Tibial artery (tissue), 4 donors: ENCODE measurements at regions of chr15 and their contacts with region 1.

Region 1: GRCh38 chr15:25470230-25470629 is 31.4 kb upstream of the UBE3A start:
- DNase-seq: no peak
- H3K4me3 ChIP-seq: no peak overlapping the region
- H3K27ac ChIP-seq: no peak overlapping the region
- H3K4me1 ChIP-seq: no peaks in the 10 kb centered on the region
- H3K27me3 ChIP-seq: no peaks in the 10 kb centered on the region
- CTCF ChIP-seq: no peak

Region 2: DNA sequence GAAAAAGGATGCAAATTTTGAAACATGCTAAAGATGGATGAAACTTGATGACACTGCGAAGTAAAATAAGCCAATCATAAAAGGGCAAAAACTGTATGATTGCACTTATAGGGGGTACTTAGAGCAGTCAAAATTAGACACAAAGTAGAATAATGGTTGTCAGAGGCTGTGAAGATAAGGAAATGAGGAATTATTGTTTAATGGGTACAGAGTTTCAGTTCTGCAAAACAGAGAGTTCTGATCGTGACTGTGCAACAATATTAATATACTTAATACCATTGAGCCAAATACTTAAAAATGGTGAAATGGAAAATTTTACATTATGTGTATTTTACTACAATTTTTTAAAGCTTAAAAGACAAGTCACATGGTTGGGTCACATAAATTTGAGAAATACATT is 66.5 kb before region 1 on chr15:
- intact Hi-C with region 1: loop called (anchors 2 kb)
- DNase-seq: no peak
- H3K4me3 ChIP-seq: no peak overlapping the region
- H3K27ac ChIP-seq: no peak overlapping the region
- H3K4me1 ChIP-seq: peaks cover 0 to 21% (median 0%) of the 10 kb centered on the region in 4 donors
- H3K27me3 ChIP-seq: no peaks in the 10 kb centered on the region
- CTCF ChIP-seq: no peak